ENCODE measurements at regions of chr12 and their contacts with region 1.

Region 1: GRCh38 chr12:27305673-27306456 is 26.8 kb upstream of the BMAL2 start:
- DNase-seq: no peak
- H3K4me3 Mint-ChIP-seq: no peak overlapping the region
- H3K27ac Mint-ChIP-seq: peak overlapping the region; percentile 55
- H3K4me1 Mint-ChIP-seq: peaks cover 12% of the 10 kb centered on the region
- H3K27me3 Mint-ChIP-seq: no peaks in the 10 kb centered on the region

Region 2: GRCh38 chr12:26845057-26845666 is 460.7 kb before region 1 on chr12:
- CTCF ChIA-PET with region 1: no interaction called
- DNase-seq: peak; percentile 27
- H3K4me3 Mint-ChIP-seq: no peak overlapping the region
- H3K27ac Mint-ChIP-seq: no peak overlapping the region
- H3K4me1 Mint-ChIP-seq: peaks cover 17% of the 10 kb centered on the region
- H3K27me3 Mint-ChIP-seq: peaks cover 15% of the 10 kb centered on the region

Region 3: GRCh38 chr12:27014085-27014858 is 291.6 kb before region 1 on chr12 and contains the start of gene TM7SF3:
- CTCF ChIA-PET with region 1: interaction called, 105 read pairs
- DNase-seq: peak; percentile 97
- H3K4me3 Mint-ChIP-seq: peak within 1 kb of the TSS; percentile 94
- H3K27ac Mint-ChIP-seq: peak within 1 kb of the TSS; percentile 98
- H3K4me1 Mint-ChIP-seq: peaks cover 58% of the 10 kb centered on the region
- H3K27me3 Mint-ChIP-seq: peaks cover 3% of the 10 kb centered on the region

Region 4: DNA sequence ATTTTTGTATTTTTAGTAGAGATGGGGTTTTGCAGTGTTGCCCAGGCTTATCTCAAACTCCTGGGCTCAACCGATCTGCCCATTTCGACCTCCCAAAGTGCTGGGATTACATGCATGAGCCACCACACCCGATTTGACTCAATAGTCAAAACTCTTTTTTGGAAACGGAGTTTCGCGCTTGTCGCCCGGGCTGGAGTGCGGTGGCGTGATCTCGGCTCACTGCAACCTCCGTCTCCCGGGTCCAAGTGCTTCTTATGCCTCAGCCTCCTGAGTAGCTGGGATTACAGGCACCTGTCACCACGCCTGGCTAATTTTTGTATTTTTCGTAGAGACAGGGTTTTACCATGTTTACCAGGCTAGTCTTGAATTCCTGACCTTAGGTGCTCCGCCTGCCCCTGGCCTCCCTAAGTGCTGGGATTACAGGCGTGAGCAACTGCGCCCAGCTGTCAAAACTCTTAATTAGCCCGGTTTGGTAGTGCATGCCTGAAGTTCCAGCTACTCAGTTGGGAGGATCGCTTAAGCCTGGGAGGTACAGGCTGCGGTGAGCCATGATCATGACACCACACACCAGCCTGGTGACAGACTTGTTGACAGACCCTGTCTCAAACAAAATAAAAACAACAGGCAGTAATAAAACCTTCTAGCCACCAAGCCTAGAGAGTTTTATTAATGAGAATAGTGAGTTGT is 271.1 kb before region 1 on chr12:
- CTCF ChIA-PET with region 1: interaction called, 49 read pairs
- DNase-seq: no peak
- H3K4me3 Mint-ChIP-seq: no peak overlapping the region
- H3K27ac Mint-ChIP-seq: no peak overlapping the region
- H3K4me1 Mint-ChIP-seq: peaks cover 2% of the 10 kb centered on the region
- H3K27me3 Mint-ChIP-seq: no peaks in the 10 kb centered on the region

Region 5: GRCh38 chr12:27243804-27244683 is 61.8 kb before region 1 on chr12 and contains the start of gene STK38L:
- CTCF ChIA-PET with region 1: interaction called, 10 read pairs
- DNase-seq: peak; percentile 97
- H3K4me3 Mint-ChIP-seq: peak within 1 kb of the TSS; percentile 100
- H3K27ac Mint-ChIP-seq: peak within 1 kb of the TSS; percentile 97
- H3K4me1 Mint-ChIP-seq: peaks cover 45% of the 10 kb centered on the region
- H3K27me3 Mint-ChIP-seq: no peaks in the 10 kb centered on the region

Region 6: GRCh38 chr12:27277846-27278260 is 28.0 kb before region 1 on chr12:
- CTCF ChIA-PET with region 1: interaction called, 13 read pairs
- DNase-seq: no peak
- H3K4me3 Mint-ChIP-seq: no peak overlapping the region
- H3K27ac Mint-ChIP-seq: no peak overlapping the region
- H3K4me1 Mint-ChIP-seq: peaks cover 10% of the 10 kb centered on the region
- H3K27me3 Mint-ChIP-seq: no peaks in the 10 kb centered on the region

Region 7: DNA sequence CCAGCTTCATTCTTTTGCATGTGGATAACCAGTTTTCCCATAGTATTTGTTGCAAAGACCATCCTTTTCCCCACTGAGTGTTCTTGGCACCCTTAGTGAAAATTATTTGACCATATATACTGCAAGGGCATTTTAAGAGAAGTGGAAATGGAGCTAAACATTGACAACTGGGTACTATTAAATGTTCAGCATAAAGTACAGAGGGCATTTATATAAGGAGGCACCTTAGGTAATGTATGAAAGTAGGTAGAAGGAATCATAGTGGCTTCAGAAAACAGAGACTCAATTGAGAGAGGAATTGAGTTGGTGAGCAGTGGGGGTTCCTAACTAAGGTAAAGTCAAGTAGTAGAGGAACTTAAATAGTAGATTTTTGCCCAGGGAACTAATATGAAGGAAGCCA is 106.2 kb after region 1 on chr12:
- CTCF ChIA-PET with region 1: no interaction called
- DNase-seq: no peak
- H3K4me3 Mint-ChIP-seq: no peak overlapping the region
- H3K27ac Mint-ChIP-seq: no peak overlapping the region
- H3K4me1 Mint-ChIP-seq: no peaks in the 10 kb centered on the region
- H3K27me3 Mint-ChIP-seq: no peaks in the 10 kb centered on the region

Region 8: GRCh38 chr12:27424631-27425230 is 118.9 kb after region 1 on chr12:
- CTCF ChIA-PET with region 1: no interaction called
- DNase-seq: peak; percentile 29
- H3K4me3 Mint-ChIP-seq: no peak overlapping the region
- H3K27ac Mint-ChIP-seq: no peak overlapping the region
- H3K4me1 Mint-ChIP-seq: peaks cover 8% of the 10 kb centered on the region
- H3K27me3 Mint-ChIP-seq: no peaks in the 10 kb centered on the region

Measured in activated naive CD4-positive, alpha-beta T cell treated with anti-CD3 and anti-CD28 coated beads, Interleukin-2, amount 10 ng/mL, durations not matched to agents 7 days and 5 days (primary cell).